ENCODE measurements at regions of chr15 and their contacts with region 1.

Region 1: DNA sequence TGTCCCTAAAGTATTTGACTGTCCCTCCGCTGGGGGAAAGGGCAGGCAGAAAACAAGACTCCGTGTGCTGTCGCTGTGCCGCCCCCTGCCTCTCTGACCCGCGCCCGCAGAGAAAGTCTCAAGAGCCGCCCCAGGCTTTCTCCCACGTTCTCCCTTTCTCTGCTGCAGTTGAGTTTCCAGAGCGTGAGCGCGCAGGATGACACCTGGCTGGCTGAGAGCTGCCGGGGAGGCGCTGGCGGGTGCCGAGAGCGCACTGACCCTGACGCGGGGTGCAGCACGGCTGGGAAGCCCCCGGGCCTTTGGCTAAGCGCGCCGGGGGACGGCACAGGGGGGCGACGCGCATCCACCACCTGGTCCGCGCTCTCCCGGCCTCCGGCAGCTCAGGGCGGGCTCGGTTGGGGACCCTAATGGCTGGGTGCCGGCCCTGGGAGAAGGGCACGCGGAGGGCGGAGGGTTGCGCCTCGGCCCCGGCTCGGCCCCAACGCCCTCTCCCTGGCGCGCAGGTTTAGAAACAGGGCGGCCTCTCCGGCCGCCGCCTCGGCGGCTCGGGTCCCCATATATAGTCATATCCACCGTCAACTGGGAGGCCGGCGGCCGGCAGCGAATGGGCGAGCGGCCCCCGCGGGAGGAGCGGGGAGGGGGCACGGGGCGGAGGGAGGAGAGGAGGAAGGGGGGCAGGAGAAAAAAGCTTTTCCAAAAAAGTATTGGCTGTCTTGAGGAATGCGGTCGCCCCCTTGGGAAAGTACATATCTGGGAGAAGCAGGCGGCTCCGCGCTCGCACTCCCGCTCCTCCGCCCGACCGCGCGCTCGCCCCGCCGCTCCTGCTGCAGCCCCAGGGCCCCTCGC is at the start of gene TPM1:
- DNase-seq: peak; percentile 92
- ATAC-seq: peak; percentile 82
- total RNA-seq, gene TPM1: 13,805 TPM

Region 2: GRCh38 chr15:62782039-62782791 is 260.0 kb before region 1 on chr15:
- intact Hi-C with region 1: loop called (anchors 1 kb)
- DNase-seq: peak; percentile 80
- ATAC-seq: peak; percentile 92

Region 3: GRCh38 chr15:62896978-62897647 is 145.1 kb before region 1 on chr15:
- intact Hi-C with region 1: loop called (anchors 1 kb)
- DNase-seq: peak; percentile 88
- ATAC-seq: peak; percentile 77

Region 4: DNA sequence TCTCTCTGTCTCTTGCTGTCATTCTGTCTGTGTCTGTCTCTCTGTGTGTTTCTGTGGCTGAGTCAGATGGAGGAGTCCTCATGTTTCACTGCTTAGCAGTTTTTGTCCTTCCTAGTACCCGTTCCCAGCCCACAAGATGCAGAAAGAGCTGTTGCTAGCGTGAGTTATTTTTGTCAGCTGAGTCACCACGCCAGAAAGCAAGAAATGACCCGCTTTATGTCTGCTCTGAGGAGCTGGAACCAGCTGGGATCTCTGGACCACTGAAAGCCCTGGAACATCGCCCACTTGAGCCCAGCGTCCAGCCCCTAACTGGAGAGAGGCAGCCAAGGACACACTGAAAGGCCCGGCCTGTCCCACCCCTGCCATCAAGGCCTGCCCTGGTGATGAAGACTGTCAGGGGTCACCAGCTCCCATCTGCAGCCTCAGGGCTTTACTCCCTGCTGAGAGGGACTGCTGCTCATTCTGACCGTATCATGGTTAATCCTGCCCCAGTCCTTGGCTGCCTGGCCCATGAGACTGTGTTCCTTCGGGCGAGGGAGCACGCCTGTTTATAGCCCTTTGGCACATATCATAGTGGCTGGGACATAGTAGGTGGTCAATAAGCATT is 101.3 kb before region 1 on chr15:
- intact Hi-C with region 1: loop called (anchors 5 kb)
- DNase-seq: peak; percentile 73
- ATAC-seq: peak; percentile 89

Region 5: DNA sequence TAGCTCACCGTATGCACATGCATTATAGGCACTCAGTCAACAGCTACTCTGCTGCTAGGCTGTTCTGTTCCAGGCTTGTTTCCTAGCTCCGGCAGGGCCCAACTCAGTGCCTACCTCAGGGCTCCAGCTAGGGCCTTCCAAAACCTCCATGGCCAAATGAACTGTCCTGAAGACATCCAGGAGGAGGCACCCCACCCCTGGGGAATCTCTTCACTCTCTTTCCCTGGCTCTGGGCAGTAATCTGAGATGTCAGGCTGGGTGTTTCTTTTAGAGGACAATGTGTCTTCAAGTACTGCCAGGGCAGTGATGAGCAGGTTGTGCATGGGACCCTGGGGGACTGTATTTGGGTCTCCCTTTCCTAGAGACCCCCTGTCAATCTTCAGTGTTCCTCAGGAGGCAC is 38.0 kb before region 1 on chr15:
- intact Hi-C with region 1: loop called (anchors 2 kb)
- DNase-seq: no peak
- ATAC-seq: no peak

Region 6: GRCh38 chr15:63107895-63108546 is 65.8 kb after region 1 on chr15:
- intact Hi-C with region 1: no loop called
- DNase-seq: no peak
- ATAC-seq: no peak